ENCODE measurements at regions of chr12 and their contacts with region 1.

Region 1: DNA sequence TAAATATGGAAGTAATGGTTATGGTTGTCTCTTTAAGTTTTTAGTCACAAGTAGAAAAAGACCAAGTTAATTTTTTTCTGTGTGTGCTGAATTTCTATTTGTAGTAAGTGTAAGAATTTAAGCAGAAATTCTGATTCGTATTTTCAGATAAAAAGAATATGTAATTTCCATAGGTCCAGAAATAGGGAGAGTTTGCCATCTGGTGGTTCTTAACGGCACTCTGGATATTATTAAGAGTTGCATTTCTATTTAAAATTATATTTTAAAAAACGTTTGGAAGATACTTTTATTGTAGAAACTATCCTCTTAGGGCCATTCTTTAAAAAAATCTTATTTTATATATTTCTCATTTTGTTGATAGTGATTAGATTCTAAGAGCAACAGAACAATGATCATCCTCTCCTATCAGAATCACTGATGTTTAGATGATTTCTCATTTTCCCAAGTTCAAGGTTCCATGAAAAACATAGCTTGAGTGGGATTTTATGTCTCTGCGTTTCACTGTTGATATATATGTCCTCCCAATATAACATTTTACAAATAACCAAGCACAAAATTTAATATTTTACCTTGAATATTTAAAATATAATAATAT is 88.3 kb downstream of the LRRK2 start:
- H3K4me3 ChIP-seq: no peak overlapping the region
- H3K27ac ChIP-seq: no peak overlapping the region
- H3K4me1 ChIP-seq: no peaks in the 10 kb centered on the region
- CTCF ChIP-seq: no peak

Region 2: GRCh38 chr12:40152783-40153383 is 160.2 kb before region 1 on chr12:
- CTCF ChIA-PET with region 1: interaction called, 13 read pairs
- POLR2A ChIA-PET with region 1: no interaction called
- H3K4me3 ChIP-seq: no peak overlapping the region
- H3K27ac ChIP-seq: no peak overlapping the region
- H3K4me1 ChIP-seq: no peaks in the 10 kb centered on the region
- CTCF ChIP-seq: 0 out of 2 replicates have a peak, but pooled peaks have one; percentile 14

Region 3: DNA sequence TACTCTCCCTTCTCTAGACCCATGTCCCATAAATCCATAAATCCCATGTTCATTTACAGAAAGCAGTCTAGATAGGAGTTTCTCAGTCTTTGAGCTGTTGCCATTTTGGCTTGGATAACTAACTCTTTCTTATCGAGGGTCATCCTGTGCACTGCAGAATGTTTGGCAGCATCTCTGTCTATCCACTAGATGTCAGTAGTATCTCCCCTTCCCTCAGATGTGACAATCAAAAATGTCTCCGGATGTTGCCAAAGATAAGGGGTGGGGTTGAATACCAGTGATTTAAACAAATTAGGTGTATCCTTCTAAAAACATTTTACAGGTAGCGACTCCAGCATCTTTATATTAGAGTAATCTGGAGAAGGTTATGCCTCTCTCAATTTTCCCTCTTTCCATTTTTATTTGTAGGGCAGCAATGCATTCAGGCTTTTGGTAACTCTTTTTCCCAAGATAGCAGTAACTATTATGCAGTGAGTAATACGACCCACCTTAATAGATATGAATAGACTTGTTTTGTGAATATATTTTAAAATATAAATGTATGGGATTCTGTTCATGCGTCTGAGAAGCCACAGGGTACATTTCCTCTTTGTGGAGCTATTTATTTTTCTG is 12.4 kb after region 1 on chr12:
- CTCF ChIA-PET with region 1: interaction called, 24 read pairs
- POLR2A ChIA-PET with region 1: no interaction called
- H3K4me3 ChIP-seq: no peak overlapping the region
- H3K27ac ChIP-seq: no peak overlapping the region
- H3K4me1 ChIP-seq: no peaks in the 10 kb centered on the region
- CTCF ChIP-seq: no peak